ENCODE measurements at regions of chr20 and their contacts with region 1.

Region 1: GRCh38 chr20:47272893-47273590 is 83.5 kb downstream of the ZMYND8 start:
- DNase-seq: no peak
- H3K4me3 ChIP-seq: no peak overlapping the region
- H3K27ac ChIP-seq: peak overlapping the region in 7 of 8 donors; percentile 73 to 83 (median 79)
- H3K4me1 ChIP-seq: peaks cover 8 to 58% (median 37%) of the 10 kb centered on the region in 6 donors
- H3K27me3 ChIP-seq: no peaks in the 10 kb centered on the region
- CTCF ChIP-seq: peak; percentile 74 to 97 (median 86)
- POLR2A ChIP-seq: no peak

Region 2: GRCh38 chr20:47220161-47220582 is 52.9 kb before region 1 on chr20:
- intact Hi-C with region 1: no loop called
- DNase-seq: no peak
- H3K4me3 ChIP-seq: no peak overlapping the region
- H3K27ac ChIP-seq: no peak overlapping the region
- H3K4me1 ChIP-seq: peaks cover 0 to 12% (median 0%) of the 10 kb centered on the region in 6 donors
- H3K27me3 ChIP-seq: no peaks in the 10 kb centered on the region
- CTCF ChIP-seq: peak in 10 of 11 experiments; percentile 25 to 72 (median 45)
- POLR2A ChIP-seq: no peak

Region 3: DNA sequence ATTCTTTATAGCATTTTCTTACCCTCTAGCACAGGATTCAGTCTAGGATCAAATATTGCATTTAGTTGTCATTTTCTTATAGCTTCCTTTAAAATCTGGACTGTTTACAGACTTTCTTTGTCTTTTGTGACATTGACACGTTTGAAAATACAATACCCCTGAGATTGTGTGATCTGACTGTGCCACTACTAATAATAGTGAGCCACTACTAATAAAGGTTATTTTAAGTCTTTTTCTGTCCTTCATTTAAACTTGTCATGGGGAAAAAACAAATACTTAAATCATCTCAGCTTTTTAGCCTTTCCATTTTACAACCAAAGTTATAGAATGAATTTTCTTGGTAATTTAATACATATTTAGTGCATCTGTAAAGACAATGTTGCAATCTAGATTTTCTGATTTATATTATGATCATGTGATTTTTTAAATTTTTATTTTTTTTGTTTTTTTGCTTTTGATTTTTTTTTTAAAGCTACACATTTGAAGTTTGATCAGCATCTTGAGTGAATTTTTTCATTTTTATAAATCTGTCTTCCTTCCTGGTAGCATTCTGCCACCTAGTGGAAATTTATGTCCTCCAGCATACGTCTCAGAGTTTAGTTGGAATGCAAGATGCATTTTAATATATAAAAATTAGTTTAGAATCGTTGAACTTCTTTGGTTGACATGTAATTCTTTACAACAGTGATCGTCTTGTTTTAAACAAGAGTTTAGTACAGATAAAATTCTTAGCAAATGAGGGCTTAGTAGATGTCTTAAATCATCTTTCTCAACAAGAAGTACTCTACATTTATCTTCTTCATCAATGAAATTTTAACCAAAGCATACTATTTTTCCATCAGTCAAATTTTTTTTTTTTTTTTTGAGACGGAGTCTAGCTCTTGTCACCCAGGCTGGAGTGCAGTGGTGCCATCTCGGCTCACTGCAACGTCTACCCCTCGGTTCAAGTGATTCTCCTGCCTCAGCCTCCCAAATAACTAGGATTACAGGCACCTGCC is 348.1 kb after region 1 on chr20:
- intact Hi-C with region 1: loop called (anchors 5 kb)
- DNase-seq: no peak
- H3K4me3 ChIP-seq: no peak overlapping the region
- H3K27ac ChIP-seq: peak overlapping the region in 5 of 8 donors; percentile 1 to 33 (median 19)
- H3K4me1 ChIP-seq: peaks cover 5 to 62% (median 14%) of the 10 kb centered on the region in 6 donors
- H3K27me3 ChIP-seq: no peaks in the 10 kb centered on the region
- CTCF ChIP-seq: peak; percentile 58 to 84 (median 79)
- POLR2A ChIP-seq: no peak

Measured in spleen (tissue), 13 donors.